ENCODE measurements at regions of chr3 and their contacts with region 1.

Region 1: GRCh38 chr3:31356941-31357340 is 175.8 kb upstream of the STT3B start:
- DNase-seq: no peak
- H3K4me3 Mint-ChIP-seq: no peak overlapping the region
- H3K27ac Mint-ChIP-seq: peak overlapping the region; percentile 64
- H3K4me1 Mint-ChIP-seq: peaks cover 39% of the 10 kb centered on the region
- H3K27me3 Mint-ChIP-seq: no peaks in the 10 kb centered on the region

Region 2: GRCh38 chr3:31288641-31289100 is 68.3 kb before region 1 on chr3:
- intact Hi-C with region 1: loop called (anchors 2 kb)
- DNase-seq: peak; percentile 44
- H3K4me3 Mint-ChIP-seq: peak overlapping the region; percentile 46
- H3K27ac Mint-ChIP-seq: peak overlapping the region; percentile 87
- H3K4me1 Mint-ChIP-seq: peaks cover 49% of the 10 kb centered on the region
- H3K27me3 Mint-ChIP-seq: no peaks in the 10 kb centered on the region

Region 3: GRCh38 chr3:32120471-32120870 is 763.5 kb after region 1 on chr3:
- intact Hi-C with region 1: no loop called
- DNase-seq: no peak
- H3K4me3 Mint-ChIP-seq: no peak overlapping the region
- H3K27ac Mint-ChIP-seq: no peak overlapping the region
- H3K4me1 Mint-ChIP-seq: peaks cover 9% of the 10 kb centered on the region
- H3K27me3 Mint-ChIP-seq: peaks cover 3% of the 10 kb centered on the region

Measured in activated T-helper 1 cell treated with anti-CD3 and anti-CD28 coated beads, Interleukin-12 subunit alpha, Interleukin-12 subunit beta, Interleukin-2, Interleukin-4 antibody, amounts not matched to agents 30 ng/mL and 10 ng/mL and 1 ng/mL, durations not matched to agents 14 hours and 24 hours and 36 hours (primary cell).